Gastrocnemius medialis (tissue), 4 donors: ENCODE measurements at regions of chr9 and their contacts with region 1.

Region 1: GRCh38 chr9:76704593-76705204 is 59.5 kb upstream of the PCA3 start:
- DNase-seq: no peak
- ATAC-seq: peak in 1 of 2 donors; percentile 58
- H3K4me3 ChIP-seq: no peak overlapping the region
- H3K27ac ChIP-seq: no peak overlapping the region
- H3K4me1 ChIP-seq: no peaks in the 10 kb centered on the region
- H3K27me3 ChIP-seq: peaks cover 0 to 5% (median 0%) of the 10 kb centered on the region in 3 donors
- CTCF ChIP-seq: peak; percentile 20 to 68 (median 52)
- POLR2A ChIP-seq: no peak

Region 2: DNA sequence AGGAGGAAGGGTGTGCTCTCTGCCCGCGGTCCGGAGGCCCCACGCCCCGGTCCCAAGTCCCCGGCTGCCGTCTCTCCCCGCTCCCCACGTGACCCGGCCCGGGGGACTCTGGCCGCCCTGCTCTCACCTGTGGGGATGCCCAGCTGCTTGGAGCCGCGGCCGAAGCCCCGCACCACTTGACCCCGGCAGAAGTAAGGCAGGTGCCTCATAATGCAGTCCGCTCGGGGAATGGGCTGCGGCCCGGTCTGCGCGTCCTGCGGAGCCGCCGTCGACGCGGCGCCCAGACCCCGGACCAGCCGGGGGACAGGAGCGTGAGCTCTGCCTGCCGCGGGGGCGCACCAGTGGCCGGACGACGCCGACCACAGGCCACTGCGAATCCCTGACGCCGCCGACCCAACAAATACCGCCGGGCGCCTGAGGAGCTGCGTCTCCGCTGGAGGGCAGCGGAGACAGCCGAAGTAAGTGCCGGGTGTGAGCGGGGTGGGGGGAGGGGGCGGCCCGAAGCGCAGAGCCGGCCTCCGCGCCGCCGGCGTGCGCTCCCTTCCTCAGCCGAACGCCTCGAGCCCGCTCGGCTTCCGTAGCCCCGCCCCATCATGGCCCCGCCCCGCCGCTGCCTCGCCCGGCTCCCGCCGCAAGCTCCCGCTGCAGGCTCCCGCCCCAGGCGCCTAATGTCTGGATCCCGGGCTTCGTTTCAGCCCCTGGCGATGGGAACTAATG is 310.6 kb before region 1 on chr9 and contains the start of gene RFK:
- in situ Hi-C with region 1: no loop called
- intact Hi-C with region 1: loop called (anchors 2 kb)
- DNase-seq: peak; percentile 84 to 86
- ATAC-seq: peak; percentile 86
- H3K4me3 ChIP-seq: peak within 1 kb of the TSS; percentile 75 to 96 (median 84)
- H3K27ac ChIP-seq: peak within 1 kb of the TSS; percentile 83 to 90 (median 88)
- H3K4me1 ChIP-seq: peaks cover 6 to 15% of the 10 kb centered on the region in 2 donors
- H3K27me3 ChIP-seq: no peaks in the 10 kb centered on the region
- CTCF ChIP-seq: peak; percentile 37 to 61 (median 52)
- POLR2A ChIP-seq: peak; percentile 58 to 65
- total RNA-seq, gene RFK: 13.2 to 33.6 (median 25.6) TPM

Region 3: DNA sequence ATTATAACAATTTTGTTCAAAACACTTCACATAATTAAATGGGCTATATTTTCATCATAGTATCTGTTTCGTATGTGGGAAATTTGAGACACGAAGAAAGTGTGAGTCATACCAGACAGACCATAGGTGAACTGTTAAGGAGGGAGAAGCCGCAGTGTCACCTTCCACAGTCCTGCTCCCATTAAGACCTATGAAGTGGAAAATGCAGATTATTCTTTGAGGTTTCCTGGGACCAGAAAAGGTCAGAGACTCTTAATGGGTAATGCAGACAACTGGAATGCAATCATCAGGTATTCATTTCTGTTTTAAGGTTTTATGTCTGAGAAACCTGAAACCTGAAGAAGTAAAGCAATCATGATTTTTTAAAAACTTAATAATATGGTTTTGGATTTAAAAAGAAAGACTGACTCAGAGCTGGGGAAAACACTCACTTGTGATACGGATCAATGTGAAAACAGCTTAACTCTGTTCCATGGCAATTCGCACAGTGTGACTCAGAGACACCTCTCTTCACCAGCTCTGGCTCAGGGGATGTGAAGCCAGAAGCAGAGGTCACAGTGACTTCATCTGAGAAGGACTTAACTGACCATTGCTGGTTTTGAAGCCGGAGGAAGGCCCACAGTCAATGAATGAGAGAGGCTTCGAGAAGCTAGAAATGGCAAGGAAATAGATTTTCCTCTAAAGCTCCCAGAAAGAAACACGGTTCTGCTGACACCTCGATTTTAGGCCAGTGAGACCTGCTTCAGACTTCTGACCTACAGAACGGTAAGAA is 263.0 kb before region 1 on chr9:
- in situ Hi-C with region 1: loop called in 3 of 4 experiments (anchors 5 kb)
- intact Hi-C with region 1: no loop called
- DNase-seq: no peak
- ATAC-seq: no peak
- H3K4me3 ChIP-seq: no peak overlapping the region
- H3K27ac ChIP-seq: no peak overlapping the region
- H3K4me1 ChIP-seq: no peaks in the 10 kb centered on the region
- H3K27me3 ChIP-seq: no peaks in the 10 kb centered on the region
- CTCF ChIP-seq: no peak
- POLR2A ChIP-seq: no peak

Region 4: DNA sequence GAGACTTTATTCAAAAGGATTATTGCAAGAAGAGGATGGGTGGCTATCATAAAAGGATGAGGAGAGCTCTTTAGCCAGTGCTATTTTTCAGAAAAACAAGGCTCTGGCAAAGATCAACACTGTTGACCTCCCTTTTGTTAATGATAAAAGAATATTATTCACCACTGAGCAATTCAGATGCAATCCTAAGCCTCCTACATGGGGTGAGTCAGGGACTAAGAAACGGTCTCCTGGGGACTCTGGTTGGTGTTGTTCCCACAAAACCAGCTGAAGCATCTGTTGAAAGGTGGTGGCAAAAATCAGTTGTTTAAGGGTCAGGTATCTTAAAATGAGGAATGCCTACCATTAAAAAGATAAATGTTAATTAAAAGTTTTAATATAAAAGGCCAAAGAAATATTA is 253.5 kb before region 1 on chr9:
- in situ Hi-C with region 1: loop called (anchors 5 to 10 kb)
- intact Hi-C with region 1: loop called (anchors 1 kb)
- DNase-seq: no peak
- ATAC-seq: no peak
- H3K4me3 ChIP-seq: no peak overlapping the region
- H3K27ac ChIP-seq: no peak overlapping the region
- H3K4me1 ChIP-seq: no peaks in the 10 kb centered on the region
- H3K27me3 ChIP-seq: no peaks in the 10 kb centered on the region
- CTCF ChIP-seq: no peak
- POLR2A ChIP-seq: no peak

Region 5: DNA sequence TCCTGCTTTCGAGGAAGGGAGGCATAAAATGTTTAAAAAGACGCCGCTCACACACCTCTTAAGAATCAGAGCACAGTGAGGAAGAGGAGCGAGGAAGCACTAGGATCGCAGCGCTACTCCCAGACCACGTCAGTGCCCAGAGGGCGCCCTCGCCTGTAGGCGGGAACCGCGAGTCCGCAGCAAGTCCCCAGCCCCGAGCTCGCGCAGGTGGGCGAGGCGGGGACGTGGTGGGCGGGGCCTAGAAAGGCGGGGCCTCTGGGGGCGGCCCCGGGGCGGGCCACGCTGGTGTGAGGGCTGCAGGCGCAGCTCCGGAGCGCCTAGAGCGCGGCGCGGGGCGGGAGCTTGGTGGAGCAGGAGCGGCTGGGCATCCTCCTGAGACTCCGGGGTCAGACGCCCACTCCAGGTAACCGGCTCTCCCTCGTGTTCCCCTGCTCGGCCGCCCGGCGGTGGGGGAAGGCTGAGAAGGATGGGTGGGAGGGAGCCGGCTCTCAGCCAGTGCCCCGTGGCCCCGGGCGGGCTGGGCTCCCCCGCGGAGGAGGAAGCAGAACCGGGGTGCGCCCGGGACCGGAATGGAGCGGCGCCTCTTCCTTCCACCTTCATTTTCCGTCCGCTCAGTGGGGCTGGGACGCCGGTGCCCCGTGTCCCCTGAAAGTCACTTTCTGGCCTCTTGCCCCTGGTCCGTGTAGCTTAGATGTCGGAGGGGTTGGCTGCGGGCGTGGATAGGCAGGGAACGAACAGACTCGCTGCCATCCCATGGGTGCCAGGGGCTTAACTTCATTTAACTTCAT is 245.6 kb before region 1 on chr9 and contains the start of gene GCNT1:
- in situ Hi-C with region 1: loop called in 1 of 4 experiments (anchors 10 kb)
- intact Hi-C with region 1: no loop called
- DNase-seq: peak; percentile 35 to 46
- ATAC-seq: peak; percentile 30 to 60
- H3K4me3 ChIP-seq: peak within 1 kb of the TSS; percentile 53 to 75 (median 63)
- H3K27ac ChIP-seq: peak within 1 kb of the TSS in 3 of 4 donors; percentile 28 to 57 (median 38)
- H3K4me1 ChIP-seq: no peaks in the 10 kb centered on the region
- H3K27me3 ChIP-seq: peaks cover 2 to 14% (median 3%) of the 10 kb centered on the region in 3 donors
- CTCF ChIP-seq: peak in 2 of 5 experiments; percentile 22 to 30
- POLR2A ChIP-seq: peak; percentile 28 to 46
- total RNA-seq, gene GCNT1: 0.98 to 6.6 (median 4.2) TPM

Region 6: DNA sequence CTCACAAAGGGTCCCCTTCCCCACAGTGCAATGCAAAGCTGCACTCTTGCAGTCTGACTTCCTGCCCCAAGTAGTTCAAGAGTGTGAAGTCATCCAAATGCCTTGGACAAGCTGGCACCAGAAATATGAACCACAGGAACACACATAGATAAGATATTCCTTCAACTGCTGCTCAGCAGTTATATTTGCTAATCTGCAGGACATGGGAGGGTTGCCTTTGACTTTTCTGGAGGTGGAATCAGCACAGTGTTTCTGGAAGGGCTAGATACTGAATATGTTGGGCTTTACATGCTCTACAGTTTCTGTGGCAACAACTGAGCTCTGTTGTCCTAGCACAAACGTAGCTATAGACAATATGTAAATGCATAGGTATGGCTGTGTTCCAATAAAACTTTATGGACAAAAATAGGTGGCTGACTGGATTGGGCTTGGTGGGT is 37.2 kb before region 1 on chr9:
- in situ Hi-C with region 1: no loop called
- intact Hi-C with region 1: loop called (anchors 5 kb)
- DNase-seq: no peak
- ATAC-seq: no peak
- H3K4me3 ChIP-seq: no peak overlapping the region
- H3K27ac ChIP-seq: no peak overlapping the region
- H3K4me1 ChIP-seq: no peaks in the 10 kb centered on the region
- H3K27me3 ChIP-seq: no peaks in the 10 kb centered on the region
- CTCF ChIP-seq: no peak
- POLR2A ChIP-seq: no peak